AG04450 (cell line): ENCODE measurements at regions of chr1 and their contacts with region 1.

Region 1: GRCh38 chr1:8848663-8849386 is 29.7 kb downstream of the ENO1 start:
- DNase-seq: peak; percentile 89
- H3K4me3 ChIP-seq: no peak overlapping the region
- H3K27ac ChIP-seq: no peak overlapping the region
- H3K27me3 ChIP-seq: peaks cover 11% of the 10 kb centered on the region
- CTCF ChIP-seq: peak; percentile 96

Region 2: DNA sequence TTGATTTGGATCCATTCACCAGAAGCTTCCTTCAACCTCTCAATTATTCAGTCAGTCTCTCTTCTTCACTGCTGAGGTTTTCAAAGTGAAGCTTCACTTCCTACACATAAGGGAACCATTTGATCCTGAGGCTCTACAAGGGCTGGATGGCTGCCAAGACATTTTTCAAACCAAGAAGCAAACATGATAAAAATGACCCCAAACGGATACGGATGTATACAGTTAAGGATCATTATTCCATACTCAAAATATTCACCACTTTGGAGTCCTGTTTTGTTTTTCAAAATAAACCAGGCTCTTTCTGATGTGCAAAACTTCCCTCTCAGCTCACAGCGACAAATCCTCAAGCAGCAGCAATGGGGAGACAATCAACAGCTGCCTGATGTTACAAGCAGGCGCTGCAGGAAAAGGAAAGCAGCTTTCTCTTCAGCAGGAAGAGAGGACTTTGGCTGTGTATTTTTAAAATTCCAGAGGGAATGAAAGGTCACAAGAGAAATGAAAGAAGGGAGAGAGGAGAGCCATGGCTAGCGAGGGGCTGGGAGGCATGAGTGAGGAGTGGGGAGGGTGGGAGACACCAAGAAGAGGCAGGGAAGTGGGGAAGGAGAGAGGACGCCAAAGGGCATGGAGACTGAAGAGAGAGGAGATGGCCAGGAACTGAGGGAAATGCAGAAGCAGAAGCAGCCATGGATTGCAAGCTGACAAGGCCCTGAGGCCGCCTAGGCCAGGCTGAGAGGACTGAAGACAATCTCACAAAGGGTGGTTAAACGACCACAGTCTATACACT is 385.5 kb before region 1 on chr1:
- CTCF ChIA-PET with region 1: interaction called, 16 read pairs
- POLR2A ChIA-PET with region 1: no interaction called
- DNase-seq: peak; percentile 81
- H3K4me3 ChIP-seq: peak overlapping the region; percentile 30
- H3K27ac ChIP-seq: peak overlapping the region; percentile 91
- H3K27me3 ChIP-seq: no peaks in the 10 kb centered on the region
- CTCF ChIP-seq: no peak

Region 3: GRCh38 chr1:8702850-8703810 is 145.7 kb before region 1 on chr1:
- CTCF ChIA-PET with region 1: interaction called, 10 read pairs
- POLR2A ChIA-PET with region 1: no interaction called
- DNase-seq: peak; percentile 68
- H3K4me3 ChIP-seq: peak overlapping the region; percentile 77
- H3K27ac ChIP-seq: peak overlapping the region; percentile 35
- H3K27me3 ChIP-seq: no peaks in the 10 kb centered on the region
- CTCF ChIP-seq: peak; percentile 11; the same call in 1 of the 2 replicates

Region 4: GRCh38 chr1:8740034-8740449 is 108.8 kb before region 1 on chr1:
- CTCF ChIA-PET with region 1: interaction called, 20 read pairs
- POLR2A ChIA-PET with region 1: interaction called, 8 read pairs
- DNase-seq: peak; percentile 86
- H3K4me3 ChIP-seq: no peak overlapping the region
- H3K27ac ChIP-seq: peak overlapping the region; percentile 68
- H3K27me3 ChIP-seq: no peaks in the 10 kb centered on the region
- CTCF ChIP-seq: no peak

Region 5: DNA sequence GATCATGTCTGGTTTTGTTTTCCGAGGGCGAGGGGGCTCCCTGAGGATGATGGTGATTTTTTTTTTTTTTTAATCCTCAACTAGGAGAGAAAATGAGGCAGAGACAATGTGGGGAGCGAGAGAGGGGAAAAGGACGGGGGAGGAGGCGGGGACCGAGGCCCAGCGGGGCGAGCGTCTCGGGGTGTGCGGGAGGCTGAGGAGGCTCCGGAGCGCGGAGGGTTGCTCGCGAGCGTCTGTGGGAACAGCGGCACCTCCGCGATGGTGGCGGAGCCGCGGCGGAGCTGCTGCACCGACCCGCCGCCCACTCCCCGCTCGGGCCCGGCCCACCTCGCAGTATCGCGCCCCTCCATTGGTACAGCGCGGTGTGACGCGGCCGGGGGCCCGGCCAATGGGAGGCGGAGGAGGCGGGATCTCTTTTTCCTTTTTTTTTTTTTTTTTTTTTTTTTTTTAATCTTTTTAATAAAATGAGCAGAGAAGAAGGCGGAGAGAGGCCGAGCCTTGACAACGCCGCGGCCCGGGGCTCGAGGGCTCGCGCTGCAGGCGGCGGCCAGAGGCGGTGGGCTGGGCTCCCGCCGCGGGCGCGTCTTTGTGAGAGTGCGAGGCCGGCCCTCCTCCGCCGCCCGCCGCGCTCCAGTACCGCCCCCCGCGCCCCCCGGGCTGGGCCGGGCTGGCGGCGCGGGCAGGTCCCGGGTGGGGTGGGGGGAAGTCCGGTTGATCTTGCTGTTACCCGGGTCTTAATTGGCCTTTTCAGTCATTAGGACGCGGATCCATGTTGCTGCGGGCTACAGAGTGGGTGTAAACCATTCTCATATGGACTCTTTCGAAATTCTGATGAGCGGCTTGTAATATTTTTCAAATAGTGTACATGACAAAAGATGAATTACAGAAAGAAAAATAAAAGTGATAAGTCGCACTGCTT is 31.2 kb before region 1 on chr1 and contains the start of gene RERE:
- CTCF ChIA-PET with region 1: interaction called, 20 read pairs
- POLR2A ChIA-PET with region 1: interaction called, 25 read pairs
- DNase-seq: peak; percentile 86
- H3K4me3 ChIP-seq: peak within 1 kb of the TSS; percentile 85
- H3K27ac ChIP-seq: peak within 1 kb of the TSS; percentile 80
- H3K27me3 ChIP-seq: no peaks in the 10 kb centered on the region
- CTCF ChIP-seq: no peak
- polyA plus RNA-seq, gene RERE: 14.3 and 20.6 TPM in 2 replicates

Region 6: GRCh38 chr1:8873506-8874229 is 24.8 kb after region 1 on chr1:
- CTCF ChIA-PET with region 1: interaction called, 10 read pairs
- POLR2A ChIA-PET with region 1: interaction called, 7 read pairs
- DNase-seq: peak; percentile 84
- H3K4me3 ChIP-seq: peak overlapping the region; percentile 20; the same call in 1 of the 2 replicates
- H3K27ac ChIP-seq: peak overlapping the region; percentile 65
- H3K27me3 ChIP-seq: no peaks in the 10 kb centered on the region
- CTCF ChIP-seq: no peak

Region 7: GRCh38 chr1:8905582-8906191 is 56.9 kb after region 1 on chr1:
- CTCF ChIA-PET with region 1: no interaction called
- POLR2A ChIA-PET with region 1: no interaction called
- DNase-seq: no peak
- H3K4me3 ChIP-seq: no peak overlapping the region
- H3K27ac ChIP-seq: no peak overlapping the region
- H3K27me3 ChIP-seq: no peaks in the 10 kb centered on the region
- CTCF ChIP-seq: no peak